Endothelial cell of umbilical vein (primary cell): ENCODE measurements at regions of chr15 and their contacts with region 1.

Region 1: GRCh38 chr15:47196057-47196456 is 521.2 kb upstream of the SEMA6D start:
- DNase-seq: peak; percentile 83
- H3K4me3 ChIP-seq: no peak overlapping the region
- H3K27ac ChIP-seq: no peak overlapping the region
- H3K4me1 ChIP-seq: peaks cover 3% of the 10 kb centered on the region
- H3K27me3 ChIP-seq: no peaks in the 10 kb centered on the region
- CTCF ChIP-seq: peak; percentile 85
- POLR2A ChIP-seq: no peak

Region 2: DNA sequence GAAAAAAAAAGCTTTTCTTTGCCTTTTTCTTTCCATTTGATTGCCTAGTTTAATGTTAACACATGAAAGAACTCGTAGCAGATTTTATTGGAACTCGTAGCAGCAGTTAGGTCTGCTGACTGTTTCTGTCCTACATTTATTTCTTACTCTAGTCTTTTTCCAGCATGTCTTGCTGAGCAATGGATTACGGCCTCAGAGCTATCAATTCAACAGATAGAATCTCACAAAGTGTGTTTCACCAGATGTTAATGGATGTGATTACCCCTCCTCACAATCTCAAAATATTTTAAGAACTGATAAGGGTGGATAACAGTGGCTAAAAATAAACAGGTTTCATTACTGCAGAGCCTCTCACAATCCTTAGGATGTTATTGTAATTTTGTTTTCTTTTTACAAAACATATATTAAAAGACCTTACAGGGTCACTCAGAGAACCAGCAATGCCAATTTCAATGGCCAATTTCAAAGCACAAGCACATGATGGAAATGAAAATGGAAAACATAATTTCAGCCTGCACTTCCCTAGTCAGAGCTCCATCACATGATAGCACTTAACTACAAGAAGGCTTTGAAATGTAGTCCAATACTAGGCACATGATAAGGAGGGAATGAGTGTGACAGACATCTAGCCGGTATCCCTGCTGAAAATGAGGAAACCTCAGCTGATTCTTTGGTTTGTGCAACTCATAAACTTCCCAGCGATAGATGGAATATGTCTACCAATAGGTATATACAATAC is 316.9 kb before region 1 on chr15:
- CTCF ChIA-PET with region 1: no interaction called
- POLR2A ChIA-PET with region 1: no interaction called
- dilution Hi-C with region 1: no loop called
- intact Hi-C with region 1: no loop called
- DNase-seq: no peak
- H3K4me3 ChIP-seq: no peak overlapping the region
- H3K27ac ChIP-seq: no peak overlapping the region
- H3K4me1 ChIP-seq: no peaks in the 10 kb centered on the region
- H3K27me3 ChIP-seq: no peaks in the 10 kb centered on the region
- CTCF ChIP-seq: no peak
- POLR2A ChIP-seq: no peak

Region 3: DNA sequence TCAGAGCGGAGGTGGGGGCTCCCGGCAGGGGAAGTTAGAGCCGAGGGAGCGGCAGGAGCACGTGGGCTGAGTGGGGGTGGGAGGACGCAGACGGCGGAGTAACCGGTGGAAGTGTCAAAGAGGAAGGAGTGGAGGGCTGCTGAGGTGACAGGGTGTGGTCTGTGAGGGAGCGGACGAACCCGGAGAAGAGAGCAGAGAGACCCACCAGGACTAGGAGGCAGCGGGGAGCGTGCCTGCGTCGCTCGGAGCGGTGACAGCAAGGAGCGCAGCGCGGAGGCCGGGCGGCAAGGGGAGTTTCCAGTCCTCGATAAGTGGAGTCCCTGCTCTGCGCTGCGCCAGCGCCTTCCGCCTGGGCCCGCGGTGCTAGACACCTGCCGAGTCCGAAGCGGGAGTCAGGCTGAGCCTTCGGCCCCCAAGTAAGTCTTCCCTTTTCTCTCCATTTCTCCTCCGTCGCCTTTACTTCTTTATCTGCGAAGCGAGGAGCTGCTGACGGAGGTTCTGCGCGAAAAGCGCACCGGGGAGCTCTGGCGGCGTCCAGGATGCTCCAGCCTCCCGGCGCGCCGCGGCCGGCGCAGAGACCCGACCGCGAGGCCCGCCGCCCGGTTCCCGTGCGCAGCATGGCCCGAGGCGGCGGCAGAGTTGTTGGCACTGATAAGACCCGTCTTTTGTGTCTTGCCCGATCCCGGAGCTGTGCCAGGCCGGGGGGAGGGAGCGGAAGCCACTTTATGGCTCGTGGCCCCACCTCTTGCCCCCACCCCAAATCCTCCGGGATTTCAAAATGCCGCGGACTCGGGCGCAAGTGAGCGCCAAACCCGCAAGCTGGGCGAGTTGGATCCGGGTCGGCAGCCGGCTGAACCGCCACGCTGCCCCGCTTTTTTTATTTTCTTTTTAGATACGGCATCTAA is 11.8 kb before region 1 on chr15:
- CTCF ChIA-PET with region 1: interaction called, 54 read pairs
- POLR2A ChIA-PET with region 1: no interaction called
- dilution Hi-C with region 1: no loop called
- intact Hi-C with region 1: no loop called
- DNase-seq: peak; percentile 62
- H3K4me3 ChIP-seq: peak overlapping the region; percentile 57 to 76 (median 72)
- H3K27ac ChIP-seq: peak overlapping the region; percentile 70
- H3K4me1 ChIP-seq: peaks cover 24% of the 10 kb centered on the region
- H3K27me3 ChIP-seq: no peaks in the 10 kb centered on the region
- CTCF ChIP-seq: no peak
- POLR2A ChIP-seq: no peak

Region 4: GRCh38 chr15:47466351-47466750 is 270.3 kb after region 1 on chr15:
- CTCF ChIA-PET with region 1: interaction called, 28 read pairs
- POLR2A ChIA-PET with region 1: no interaction called
- dilution Hi-C with region 1: no loop called
- intact Hi-C with region 1: loop called (anchors 1 kb)
- DNase-seq: peak; percentile 84
- H3K4me3 ChIP-seq: no peak overlapping the region
- H3K27ac ChIP-seq: peak overlapping the region; percentile 93
- H3K4me1 ChIP-seq: peaks cover 42% of the 10 kb centered on the region
- H3K27me3 ChIP-seq: no peaks in the 10 kb centered on the region
- CTCF ChIP-seq: no peak
- POLR2A ChIP-seq: no peak

Region 5: GRCh38 chr15:47609693-47610092 is 413.6 kb after region 1 on chr15:
- CTCF ChIA-PET with region 1: interaction called, 4 read pairs
- POLR2A ChIA-PET with region 1: no interaction called
- dilution Hi-C with region 1: no loop called
- intact Hi-C with region 1: loop called (anchors 1 kb)
- DNase-seq: no peak
- H3K4me3 ChIP-seq: no peak overlapping the region
- H3K27ac ChIP-seq: no peak overlapping the region
- H3K4me1 ChIP-seq: no peaks in the 10 kb centered on the region
- H3K27me3 ChIP-seq: no peaks in the 10 kb centered on the region
- CTCF ChIP-seq: no peak
- POLR2A ChIP-seq: no peak

Region 6: GRCh38 chr15:47717036-47717611 is 521.1 kb after region 1 on chr15 and contains the start of gene SEMA6D:
- CTCF ChIA-PET with region 1: interaction called, 91 read pairs
- POLR2A ChIA-PET with region 1: no interaction called
- dilution Hi-C with region 1: no loop called
- intact Hi-C with region 1: loop called (anchors 1 kb)
- DNase-seq: peak; percentile 87
- H3K4me3 ChIP-seq: peak within 1 kb of the TSS; percentile 64 to 90 (median 85)
- H3K27ac ChIP-seq: peak within 1 kb of the TSS; percentile 58
- H3K4me1 ChIP-seq: peaks cover 19% of the 10 kb centered on the region
- H3K27me3 ChIP-seq: no peaks in the 10 kb centered on the region
- CTCF ChIP-seq: peak; percentile 36 to 47
- POLR2A ChIP-seq: peak; percentile 19
- total RNA-seq, gene SEMA6D: 22.5 and 26.7 TPM in 2 replicates

Region 7: DNA sequence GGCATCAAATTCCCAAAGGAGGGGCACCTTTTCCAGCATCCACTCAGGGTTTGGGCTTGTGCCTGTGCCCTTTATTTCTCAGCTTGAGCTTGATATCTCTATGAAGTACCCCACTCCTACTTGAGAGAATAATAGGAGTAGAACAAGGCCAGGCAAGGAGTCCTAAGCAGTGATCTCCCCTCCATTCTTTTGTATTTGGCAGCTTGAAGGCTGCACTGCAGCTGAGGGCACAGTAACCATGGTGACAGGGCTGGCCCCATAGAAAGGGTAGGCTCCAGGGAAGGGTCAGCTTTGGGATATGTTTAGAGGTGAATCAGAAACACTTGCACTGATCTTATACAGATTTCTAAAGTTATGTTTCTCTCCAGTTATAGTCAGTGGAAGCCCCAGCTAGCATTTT is 779.4 kb after region 1 on chr15:
- CTCF ChIA-PET with region 1: interaction called, 18 read pairs
- POLR2A ChIA-PET with region 1: no interaction called
- dilution Hi-C with region 1: no loop called
- intact Hi-C with region 1: no loop called
- DNase-seq: no peak
- H3K4me3 ChIP-seq: no peak overlapping the region
- H3K27ac ChIP-seq: no peak overlapping the region
- H3K4me1 ChIP-seq: no peaks in the 10 kb centered on the region
- H3K27me3 ChIP-seq: peaks cover 3 to 4% of the 10 kb centered on the region in 2 experiments
- CTCF ChIP-seq: no peak
- POLR2A ChIP-seq: no peak

Region 8: GRCh38 chr15:48285329-48286214 is 1089.5 kb after region 1 on chr15:
- CTCF ChIA-PET with region 1: interaction called, 51 read pairs
- POLR2A ChIA-PET with region 1: no interaction called
- dilution Hi-C with region 1: no loop called
- intact Hi-C with region 1: loop called (anchors 1 kb)
- DNase-seq: peak; percentile 90
- H3K4me3 ChIP-seq: peak overlapping the region in 1 of 3 experiments; percentile 55
- H3K27ac ChIP-seq: no peak overlapping the region
- H3K4me1 ChIP-seq: peaks cover 3% of the 10 kb centered on the region
- H3K27me3 ChIP-seq: peaks cover 4 to 8% of the 10 kb centered on the region in 2 experiments
- CTCF ChIP-seq: peak; percentile 41 to 70
- POLR2A ChIP-seq: no peak